Activated naive CD4-positive, alpha-beta T cell treated with anti-CD3 and anti-CD28 coated beads for 36 hours (primary cell): ENCODE measurements at regions of chr15 and their contacts with region 1.

Region 1: GRCh38 chr15:76905013-76905839 is at the start of gene SCAPER:
- DNase-seq: peak; percentile 93
- H3K4me3 Mint-ChIP-seq: peak within 1 kb of the TSS; percentile 83
- H3K27ac Mint-ChIP-seq: peak within 1 kb of the TSS; percentile 91
- H3K4me1 Mint-ChIP-seq: peaks cover 31% of the 10 kb centered on the region
- H3K27me3 Mint-ChIP-seq: no peaks in the 10 kb centered on the region
- total RNA-seq, gene SCAPER: 28.5 to 28.9 TPM

Region 2: GRCh38 chr15:76837474-76837873 is 67.8 kb before region 1 on chr15:
- CTCF ChIA-PET with region 1: no interaction called
- intact Hi-C with region 1: no loop called
- DNase-seq: no peak
- H3K4me3 Mint-ChIP-seq: no peak overlapping the region
- H3K27ac Mint-ChIP-seq: no peak overlapping the region
- H3K4me1 Mint-ChIP-seq: peaks cover 5% of the 10 kb centered on the region
- H3K27me3 Mint-ChIP-seq: no peaks in the 10 kb centered on the region

Region 3: DNA sequence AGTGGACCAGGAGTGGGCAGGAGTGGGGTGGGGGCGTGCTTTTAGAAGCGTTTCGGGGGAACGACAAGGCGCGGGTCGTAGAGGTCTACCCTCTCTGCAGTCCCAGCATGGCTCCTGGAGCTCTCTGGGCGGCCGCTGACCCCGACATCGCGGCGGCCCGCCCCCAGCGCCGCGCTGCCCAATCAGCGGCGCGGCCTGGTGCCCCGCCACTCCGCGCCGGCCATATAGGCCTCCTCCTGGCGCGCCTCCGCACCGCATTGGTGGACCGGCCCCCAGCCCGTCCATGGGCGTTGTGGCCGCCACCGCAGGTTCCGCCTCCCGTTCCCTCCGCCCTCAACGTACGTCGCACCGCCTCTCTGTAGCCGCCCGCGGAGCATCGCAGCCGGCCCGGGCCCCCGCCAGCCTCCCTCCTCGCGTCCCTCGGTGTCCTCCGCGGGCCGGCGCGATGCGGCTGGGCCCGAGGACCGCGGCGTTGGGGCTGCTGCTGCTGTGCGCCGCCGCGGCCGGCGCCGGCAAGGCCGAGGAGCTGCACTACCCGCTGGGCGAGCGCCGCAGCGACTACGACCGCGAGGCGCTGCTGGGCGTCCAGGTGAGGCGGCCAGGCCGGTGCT is 26.3 kb after region 1 on chr15 and contains the start of gene RCN2:
- CTCF ChIA-PET with region 1: interaction called, 3 read pairs
- intact Hi-C with region 1: loop called (anchors 1 kb)
- DNase-seq: peak; percentile 95
- H3K4me3 Mint-ChIP-seq: peak within 1 kb of the TSS; percentile 90
- H3K27ac Mint-ChIP-seq: peak within 1 kb of the TSS; percentile 78
- H3K4me1 Mint-ChIP-seq: peaks cover 26% of the 10 kb centered on the region
- H3K27me3 Mint-ChIP-seq: no peaks in the 10 kb centered on the region
- total RNA-seq, gene RCN2: 23.7 to 25.2 TPM

Region 4: GRCh38 chr15:76987926-76988860 is 83.0 kb after region 1 on chr15:
- CTCF ChIA-PET with region 1: no interaction called
- intact Hi-C with region 1: loop called (anchors 5 kb)
- DNase-seq: peak; percentile 92
- H3K4me3 Mint-ChIP-seq: peak overlapping the region; percentile 53
- H3K27ac Mint-ChIP-seq: peak overlapping the region; percentile 98
- H3K4me1 Mint-ChIP-seq: peaks cover 43% of the 10 kb centered on the region
- H3K27me3 Mint-ChIP-seq: no peaks in the 10 kb centered on the region

Region 5: DNA sequence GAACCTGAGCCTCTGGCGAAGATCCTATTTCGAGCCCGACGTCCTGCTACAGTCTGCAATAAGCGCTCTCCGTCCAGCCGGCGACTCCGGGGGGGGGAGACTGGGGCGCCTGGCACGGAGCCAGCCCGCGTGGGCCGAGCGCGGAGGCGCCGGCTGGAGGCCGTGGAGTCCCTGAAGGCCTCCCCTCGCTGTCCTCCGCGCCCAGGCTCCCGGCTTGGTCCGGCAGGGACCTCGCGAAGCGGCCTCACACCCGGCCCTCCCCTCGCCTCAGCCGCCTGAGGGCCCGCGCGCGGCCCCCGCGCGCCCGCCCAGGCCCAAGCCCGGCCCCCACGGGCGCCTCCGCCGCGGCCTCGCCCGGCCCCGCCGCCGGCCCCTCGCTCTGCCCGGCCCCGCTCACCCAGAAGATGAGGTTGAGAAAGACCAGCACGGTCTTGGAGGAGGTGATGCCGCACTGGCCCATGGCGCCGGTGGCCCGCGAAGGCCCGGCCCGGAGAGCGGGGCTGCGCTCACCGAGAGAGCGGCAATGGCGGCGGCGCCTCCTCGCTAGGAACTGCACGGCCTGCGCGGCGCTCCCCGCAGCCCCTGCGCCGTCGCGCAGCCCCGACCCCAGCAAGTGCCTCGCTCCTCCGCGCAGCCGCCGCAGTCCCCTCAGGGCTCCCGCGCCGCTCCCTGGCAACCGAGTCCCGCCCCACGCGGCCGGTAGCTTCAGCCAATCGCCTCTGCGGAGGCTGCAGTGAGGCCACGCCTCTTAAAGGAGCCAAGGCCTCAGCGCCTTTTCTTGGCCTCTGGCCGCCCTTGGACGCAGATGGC is 165.5 kb after region 1 on chr15 and contains the start of gene TSPAN3:
- CTCF ChIA-PET with region 1: no interaction called
- intact Hi-C with region 1: loop called (anchors 5 kb)
- DNase-seq: peak; percentile 93
- H3K4me3 Mint-ChIP-seq: peak within 1 kb of the TSS; percentile 77
- H3K27ac Mint-ChIP-seq: peak within 1 kb of the TSS; percentile 71
- H3K4me1 Mint-ChIP-seq: peaks cover 35% of the 10 kb centered on the region
- H3K27me3 Mint-ChIP-seq: no peaks in the 10 kb centered on the region
- total RNA-seq, gene TSPAN3: 21.9 to 24.9 TPM